GM10248 (cell line): ENCODE measurements at regions of chr17 and their contacts with region 1.

Region 1: DNA sequence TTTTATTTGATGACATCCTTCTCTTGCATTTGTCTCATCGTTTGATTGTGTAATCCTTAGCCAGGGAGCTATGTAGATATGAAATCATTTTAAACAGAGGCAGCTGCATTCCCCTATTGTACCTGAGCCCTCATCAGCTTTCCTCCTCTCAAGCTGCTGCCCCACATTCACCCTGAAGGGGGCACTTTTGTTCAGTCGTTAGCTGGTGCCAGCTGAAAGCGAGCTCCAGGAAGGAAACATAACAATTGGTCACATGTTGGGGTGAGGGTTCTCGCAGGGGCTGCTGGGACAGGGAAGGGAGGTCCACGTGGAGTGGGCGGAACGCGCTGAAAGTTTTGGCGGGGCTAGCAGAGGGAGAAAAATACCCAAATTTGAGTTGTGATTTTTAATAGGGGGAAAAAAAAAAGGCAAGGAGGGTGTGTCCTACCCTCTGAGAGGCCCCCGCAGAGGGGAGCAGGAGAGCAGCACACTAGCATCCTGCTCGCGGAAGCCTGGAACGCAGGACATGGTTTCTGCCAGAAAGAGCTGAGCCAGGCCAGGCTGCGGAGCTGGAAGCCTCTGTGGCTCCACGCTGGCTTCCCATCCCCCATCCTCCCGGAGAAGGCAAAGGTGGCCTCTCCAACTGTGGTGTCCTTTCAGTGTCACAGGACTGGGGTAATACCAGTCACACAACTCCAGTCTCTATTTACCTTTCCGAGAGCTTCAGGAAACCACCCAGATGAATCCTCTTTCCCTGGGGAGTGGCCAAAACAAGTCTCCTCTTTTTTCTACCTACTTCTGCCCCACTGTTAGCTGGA is 8.5 kb upstream of the MSL1 start:
- DNase-seq: peak; percentile 93
- CTCF ChIP-seq: peak; percentile 77

Region 2: DNA sequence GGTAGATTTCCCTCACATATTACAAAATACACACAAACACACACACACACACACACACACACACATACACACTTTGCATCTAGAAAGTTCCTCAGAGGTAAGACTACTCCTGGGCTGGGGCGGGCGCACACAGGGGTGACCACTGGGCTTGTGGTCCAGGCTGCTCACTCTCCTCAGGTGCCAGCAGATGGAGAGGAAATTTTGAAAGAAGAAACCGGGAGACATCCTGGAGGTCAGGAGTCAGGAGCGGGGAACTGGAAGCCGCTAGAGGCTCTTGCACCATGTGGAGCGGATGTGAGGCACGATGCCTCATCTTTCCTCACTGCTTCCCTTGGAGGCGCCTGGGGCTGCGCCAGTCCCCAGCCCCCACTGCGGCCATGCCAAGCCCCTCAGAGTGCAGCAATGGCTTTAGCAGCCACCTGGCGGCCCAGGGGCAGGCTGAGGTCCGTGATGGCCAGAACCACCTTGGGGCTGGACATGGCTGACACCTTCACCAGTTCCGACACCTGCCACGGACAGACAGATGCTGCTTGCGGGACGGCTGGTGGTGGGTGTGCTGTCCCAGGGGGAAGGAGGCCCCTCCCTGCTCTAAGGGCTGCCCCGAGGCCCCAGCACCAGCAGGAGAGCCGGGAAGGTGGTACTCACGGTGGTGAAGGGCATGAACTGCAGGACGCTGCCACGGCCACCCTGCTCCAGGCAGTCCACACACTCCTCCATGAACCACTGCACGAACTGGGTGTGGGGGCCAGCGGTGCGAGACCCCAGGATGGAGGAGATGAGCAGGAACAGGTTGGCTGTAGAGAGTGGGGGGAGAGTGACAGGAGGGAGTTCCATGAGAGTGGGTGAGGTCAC is 93.9 kb before region 1 on chr17:
- CTCF ChIA-PET with region 1: interaction called, 18 read pairs
- POLR2A ChIA-PET with region 1: no interaction called
- DNase-seq: no peak
- CTCF ChIP-seq: no peak

Region 3: GRCh38 chr17:40086150-40087044 is 26.9 kb before region 1 on chr17:
- CTCF ChIA-PET with region 1: interaction called, 13 read pairs
- POLR2A ChIA-PET with region 1: no interaction called
- DNase-seq: peak; percentile 79
- CTCF ChIP-seq: peak; percentile 86

Region 4: GRCh38 chr17:40139566-40140058 is 26.3 kb after region 1 on chr17:
- CTCF ChIA-PET with region 1: interaction called, 32 read pairs
- POLR2A ChIA-PET with region 1: interaction called, 4 read pairs
- DNase-seq: no peak
- CTCF ChIP-seq: no peak

Region 5: GRCh38 chr17:40177275-40177874 is 64.1 kb after region 1 on chr17 and contains the start of gene RAPGEFL1:
- CTCF ChIA-PET with region 1: interaction called, 27 read pairs
- POLR2A ChIA-PET with region 1: interaction called, 3 read pairs
- DNase-seq: peak; percentile 94
- CTCF ChIP-seq: no peak

Region 6: DNA sequence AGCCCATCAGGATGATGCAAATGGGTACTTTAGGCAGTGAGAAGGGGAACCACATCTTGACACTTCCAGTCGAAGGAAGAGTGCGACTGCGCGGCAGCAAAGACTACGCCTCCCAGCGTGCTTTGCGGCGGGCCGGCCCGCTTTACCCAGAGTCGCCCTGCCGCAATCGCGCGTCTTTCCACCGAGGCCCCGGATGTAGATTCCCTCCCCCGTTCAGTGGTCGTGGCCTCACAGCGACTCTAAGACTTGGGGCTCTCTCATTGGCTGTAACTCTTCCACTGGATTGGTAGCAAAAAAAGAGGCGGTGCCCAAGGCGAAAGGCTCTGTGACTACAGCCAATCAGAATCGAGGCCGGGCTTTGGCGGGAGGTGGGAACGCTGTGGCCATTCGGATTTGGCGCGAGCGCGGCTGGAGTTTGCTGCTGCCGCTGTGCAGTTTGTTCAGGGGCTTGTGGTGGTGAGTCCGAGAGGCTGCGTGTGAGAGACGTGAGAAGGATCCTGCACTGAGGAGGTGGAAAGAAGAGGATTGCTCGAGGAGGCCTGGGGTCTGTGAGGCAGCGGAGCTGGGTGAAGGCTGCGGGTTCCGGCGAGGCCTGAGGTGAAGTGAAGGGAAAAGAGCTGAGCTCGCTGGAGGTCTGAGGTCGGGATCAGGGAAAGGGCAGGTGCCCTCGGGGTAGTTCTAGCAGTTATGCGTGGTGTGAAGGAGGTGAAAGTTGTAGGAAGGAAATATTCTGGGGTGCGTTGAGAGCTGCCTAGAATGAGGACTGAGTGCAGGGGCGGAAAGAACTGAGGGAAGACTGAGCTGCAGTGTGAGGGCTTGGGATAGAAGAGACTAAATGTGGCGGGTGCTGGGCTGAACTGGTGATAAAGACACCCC is 174.4 kb after region 1 on chr17 and contains the start of gene CDC6:
- CTCF ChIA-PET with region 1: interaction called, 27 read pairs
- POLR2A ChIA-PET with region 1: no interaction called
- DNase-seq: peak; percentile 98
- CTCF ChIP-seq: no peak